PC-9 (cell line): ENCODE measurements at regions of chr1 and their contacts with region 1.

Region 1: GRCh38 chr1:98210064-98210463 is 289.2 kb upstream of the DPYD start:
- DNase-seq: peak; percentile 18 to 64
- H3K4me3 ChIP-seq: no peak overlapping the region
- H3K27ac ChIP-seq: no peak overlapping the region
- H3K4me1 ChIP-seq: no peaks in the 10 kb centered on the region; the same call in 1 of the 2 replicates
- H3K27me3 ChIP-seq: no peaks in the 10 kb centered on the region
- CTCF ChIP-seq: no peak

Region 2: GRCh38 chr1:98086796-98087441 is 123.1 kb before region 1 on chr1:
- CTCF ChIA-PET with region 1: no interaction called
- POLR2A ChIA-PET with region 1: interaction called, 9 read pairs
- intact Hi-C with region 1: loop called (anchors 10 kb)
- DNase-seq: peak; percentile 33 to 97
- H3K4me3 ChIP-seq: no peak overlapping the region
- H3K27ac ChIP-seq: peak overlapping the region; percentile 2; the same call in 1 of the 2 replicates
- H3K4me1 ChIP-seq: peaks cover 9% of the 10 kb centered on the region
- H3K27me3 ChIP-seq: no peaks in the 10 kb centered on the region
- CTCF ChIP-seq: no peak

Region 3: DNA sequence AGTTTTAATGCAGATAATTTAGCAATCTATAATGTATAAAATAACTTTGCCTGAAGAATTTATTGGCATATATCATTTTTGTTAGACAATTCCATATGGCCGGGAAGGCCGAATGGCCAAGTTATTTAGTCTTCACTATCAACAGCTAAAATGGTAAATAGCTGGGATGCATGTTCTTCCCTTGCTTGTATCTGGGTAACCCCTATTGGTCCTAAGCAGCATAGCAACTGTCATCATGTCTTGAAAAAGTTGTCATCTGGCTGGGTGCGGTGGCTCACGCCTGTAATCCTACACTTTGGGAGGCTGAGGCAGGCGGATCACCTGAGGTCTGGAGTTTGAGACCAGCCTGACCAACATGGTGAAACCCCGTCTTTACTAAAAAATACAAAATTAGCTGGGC is 50.8 kb after region 1 on chr1:
- CTCF ChIA-PET with region 1: interaction called, 4 read pairs
- POLR2A ChIA-PET with region 1: no interaction called
- intact Hi-C with region 1: loop called (anchors 1 kb)
- DNase-seq: no peak
- H3K4me3 ChIP-seq: no peak overlapping the region
- H3K27ac ChIP-seq: no peak overlapping the region
- H3K4me1 ChIP-seq: peaks cover 15% of the 10 kb centered on the region
- H3K27me3 ChIP-seq: no peaks in the 10 kb centered on the region
- CTCF ChIP-seq: no peak

Region 4: DNA sequence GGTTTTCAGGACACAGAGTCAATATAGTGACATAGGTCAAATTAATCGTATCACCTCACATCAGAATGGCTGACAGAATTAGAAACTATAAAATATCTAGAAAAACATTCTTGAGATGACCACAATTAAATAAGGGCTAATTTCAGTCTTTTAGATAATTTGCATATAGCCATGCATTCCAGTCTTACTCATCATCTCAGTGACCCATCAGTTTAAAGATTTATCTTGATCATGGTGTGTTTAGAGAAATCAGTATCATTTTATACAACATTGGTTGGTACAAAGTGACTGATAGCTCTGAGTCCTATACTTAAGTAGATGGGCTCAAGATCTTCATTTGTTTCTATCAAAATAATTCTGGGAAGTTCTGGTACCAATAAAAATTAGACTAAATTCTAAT is 189.2 kb after region 1 on chr1:
- CTCF ChIA-PET with region 1: no interaction called
- POLR2A ChIA-PET with region 1: interaction called, 15 read pairs
- intact Hi-C with region 1: no loop called
- DNase-seq: no peak
- H3K4me3 ChIP-seq: no peak overlapping the region
- H3K27ac ChIP-seq: no peak overlapping the region
- H3K4me1 ChIP-seq: no peaks in the 10 kb centered on the region
- H3K27me3 ChIP-seq: no peaks in the 10 kb centered on the region
- CTCF ChIP-seq: no peak